ENCODE measurements at regions of chr16 and their contacts with region 1.

Region 1: DNA sequence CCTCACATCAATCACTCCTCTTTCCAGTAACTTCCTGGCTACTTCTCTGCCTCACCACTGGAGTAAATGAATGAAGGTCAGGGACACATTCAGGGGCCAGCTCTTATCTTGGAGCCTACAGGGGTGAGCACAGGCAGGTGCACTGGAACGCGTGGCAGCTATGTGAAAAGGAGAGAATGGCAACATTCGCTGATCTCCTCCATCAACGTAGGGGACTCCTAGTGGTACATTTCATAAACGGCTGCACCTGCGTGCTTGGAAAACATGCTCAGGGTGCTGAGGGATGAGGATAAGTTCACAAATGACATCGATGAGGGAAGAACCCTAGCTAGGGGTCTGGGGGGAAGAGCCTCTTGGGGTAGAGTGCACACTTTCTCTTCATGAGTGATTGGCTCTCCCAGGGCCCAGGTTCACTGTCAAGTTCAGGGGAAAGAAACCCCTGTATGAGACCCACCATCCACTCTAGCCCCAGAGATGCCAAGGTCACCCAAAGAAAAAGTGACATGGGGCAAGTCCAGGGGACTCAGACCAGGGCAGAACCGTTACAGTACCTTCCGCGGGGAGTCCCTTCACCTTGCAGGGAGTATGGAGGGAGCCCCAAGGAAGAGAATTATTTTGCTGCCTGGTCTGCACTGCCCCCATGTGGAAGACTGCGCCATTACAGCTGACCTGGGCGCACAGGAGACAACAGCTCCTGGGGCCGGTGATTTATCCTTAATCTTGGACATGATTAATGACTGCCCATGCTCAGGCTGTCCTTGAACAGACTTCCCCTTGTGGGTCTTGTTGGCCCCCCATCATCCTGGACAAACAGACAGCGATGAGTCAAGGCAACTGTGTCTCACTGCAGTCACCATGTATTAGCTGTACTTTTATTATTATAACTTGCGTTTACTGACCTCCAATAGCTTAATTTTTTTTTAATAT is 30.1 kb downstream of the VAC14 start:
- DNase-seq: peak; percentile 55 to 95 (median 79)

Region 2: GRCh38 chr16:70529051-70529777 is 241.7 kb before region 1 on chr16:
- intact Hi-C with region 1: loop called (anchors 5 kb)
- DNase-seq: no peak

Region 3: DNA sequence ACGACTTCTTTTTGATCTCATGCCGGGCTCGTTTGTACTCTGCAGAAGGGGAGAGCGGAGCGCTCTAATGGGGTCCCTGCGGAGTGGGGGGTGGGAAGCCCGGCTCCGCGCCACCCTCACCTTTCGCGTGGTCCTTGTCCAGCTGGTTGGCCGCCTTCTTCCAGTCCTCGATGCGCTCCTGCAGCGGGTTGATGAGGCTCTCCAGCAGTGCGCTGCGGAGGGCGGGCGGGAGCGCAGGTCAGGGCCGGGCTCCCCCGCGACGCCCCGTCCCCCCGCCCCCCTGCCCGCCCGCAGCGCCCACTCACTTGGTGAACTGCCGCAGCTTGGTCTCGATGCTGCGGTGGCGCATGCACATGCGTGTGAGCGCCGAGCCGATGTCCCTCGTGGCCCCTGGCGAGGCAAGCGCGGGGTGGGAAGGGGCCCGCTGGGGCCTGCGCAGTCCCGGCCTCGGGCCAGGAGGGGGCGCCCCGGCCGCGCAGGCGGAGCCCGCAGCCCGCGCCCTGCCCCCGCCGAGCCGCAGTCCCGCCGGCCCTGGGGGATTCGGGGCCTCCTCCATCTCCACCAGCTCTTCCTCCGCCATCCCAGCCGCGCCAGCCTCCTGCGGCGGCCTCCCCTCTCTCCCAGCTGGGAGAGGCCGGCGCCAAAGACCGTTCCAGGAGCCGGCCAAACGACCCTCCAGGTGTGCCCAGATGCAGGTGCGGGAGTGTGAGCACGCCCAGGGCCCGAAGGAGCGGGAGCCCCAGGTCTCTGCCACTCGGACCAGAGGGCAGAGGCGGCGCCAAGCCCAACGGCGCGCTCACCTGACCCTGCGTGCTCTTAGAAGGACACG is 91.0 kb before region 1 on chr16:
- intact Hi-C with region 1: loop called (anchors 1 kb)
- DNase-seq: peak in 4 of 10 donors; percentile 10 to 90 (median 76)

Measured in posterior cingulate gyrus (tissue), 11 donors.